Activated CD8-positive, alpha-beta T cell treated with anti-CD3 and anti-CD28 coated beads for 36 hours (primary cell): ENCODE measurements at regions of chr12 and their contacts with region 1.

Region 1: GRCh38 chr12:77247542-77247941 is 182.2 kb upstream of the E2F7 start:
- DNase-seq: no peak
- ATAC-seq: no peak
- H3K4me3 Mint-ChIP-seq: no peak overlapping the region
- H3K27ac Mint-ChIP-seq: no peak overlapping the region
- H3K4me1 Mint-ChIP-seq: no peaks in the 10 kb centered on the region
- H3K27me3 Mint-ChIP-seq: no peaks in the 10 kb centered on the region
- CTCF ChIP-seq: no peak

Region 2: GRCh38 chr12:77893918-77894317 is 646.4 kb after region 1 on chr12:
- CTCF ChIA-PET with region 1: no interaction called
- POLR2A ChIA-PET with region 1: no interaction called
- intact Hi-C with region 1: loop called (anchors 10 kb)
- DNase-seq: no peak
- ATAC-seq: no peak
- H3K4me3 Mint-ChIP-seq: no peak overlapping the region
- H3K27ac Mint-ChIP-seq: no peak overlapping the region
- H3K4me1 Mint-ChIP-seq: no peaks in the 10 kb centered on the region
- H3K27me3 Mint-ChIP-seq: no peaks in the 10 kb centered on the region
- CTCF ChIP-seq: no peak